ENCODE measurements at regions of chr3 and their contacts with region 1.

Region 1: DNA sequence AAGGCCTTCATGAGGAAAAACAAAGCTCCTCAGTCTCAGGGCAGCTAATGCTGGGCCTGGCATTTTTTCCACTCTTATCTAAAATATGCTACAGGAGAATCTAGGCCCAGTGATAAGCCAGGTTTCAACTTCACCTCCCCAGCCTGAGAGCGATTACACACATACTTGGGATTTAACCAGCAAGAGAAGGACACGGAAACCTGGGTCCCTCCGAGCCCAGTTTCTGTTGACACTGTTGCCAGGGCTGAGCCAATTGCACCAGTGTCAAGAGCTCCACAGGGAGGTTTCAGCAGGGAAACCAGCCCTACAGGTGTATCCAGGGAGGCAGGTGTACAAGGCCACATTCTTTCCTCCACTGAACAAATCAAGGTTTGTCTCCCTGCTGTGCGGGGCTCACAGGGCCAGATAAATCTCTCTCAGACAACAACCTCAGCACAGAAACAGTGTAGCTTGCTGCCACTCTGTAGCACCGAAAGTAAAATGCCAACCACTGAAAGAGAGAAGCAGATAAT is 85.4 kb downstream of the MAGI1 start:
- DNase-seq: no peak
- H3K4me3 ChIP-seq: no peak overlapping the region
- H3K27ac ChIP-seq: peak overlapping the region; percentile 97
- H3K4me1 ChIP-seq: peaks cover 59% of the 10 kb centered on the region
- H3K27me3 ChIP-seq: no peaks in the 10 kb centered on the region
- CTCF ChIP-seq: no peak

Region 2: GRCh38 chr3:65178703-65179102 is 774.7 kb before region 1 on chr3:
- CTCF ChIA-PET with region 1: no interaction called
- POLR2A ChIA-PET with region 1: no interaction called
- intact Hi-C with region 1: no loop called
- DNase-seq: no peak
- H3K4me3 ChIP-seq: no peak overlapping the region
- H3K27ac ChIP-seq: no peak overlapping the region
- H3K4me1 ChIP-seq: no peaks in the 10 kb centered on the region
- H3K27me3 ChIP-seq: no peaks in the 10 kb centered on the region
- CTCF ChIP-seq: no peak

Region 3: DNA sequence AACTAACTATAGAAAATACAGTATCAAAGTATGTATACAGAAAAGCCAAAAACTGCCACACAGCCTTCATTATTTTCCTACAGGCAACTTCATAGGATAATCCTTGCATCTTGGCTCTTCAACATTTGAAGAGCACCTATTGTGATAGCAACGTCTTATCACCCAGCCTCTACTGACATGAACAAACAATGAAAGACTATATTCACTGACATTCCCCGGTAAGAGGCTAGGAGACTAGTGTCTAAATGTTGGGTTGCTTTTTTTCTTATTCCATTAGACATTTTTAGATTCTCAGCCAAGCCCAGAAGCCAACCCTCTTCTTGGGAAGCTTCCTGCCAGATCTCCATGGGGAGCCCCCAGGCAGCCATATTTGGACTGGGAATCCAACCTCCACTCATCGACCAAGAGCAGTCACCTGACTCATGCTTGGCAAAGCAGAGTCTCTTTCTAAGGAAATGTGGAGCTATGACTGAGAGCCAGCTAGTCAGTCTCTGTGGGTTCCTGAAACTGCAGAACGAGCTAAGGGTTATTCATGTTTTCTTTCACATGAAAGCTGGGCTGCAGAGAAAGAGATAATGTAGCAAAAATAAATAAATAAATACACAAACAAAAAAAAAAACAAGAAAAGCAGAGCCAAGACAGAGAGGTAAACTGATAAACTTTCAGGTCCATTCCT is 142.1 kb before region 1 on chr3:
- CTCF ChIA-PET with region 1: no interaction called
- POLR2A ChIA-PET with region 1: no interaction called
- intact Hi-C with region 1: loop called (anchors 10 kb)
- DNase-seq: peak; percentile 73
- H3K4me3 ChIP-seq: peak overlapping the region; percentile 28
- H3K27ac ChIP-seq: peak overlapping the region; percentile 84
- H3K4me1 ChIP-seq: peaks cover 43% of the 10 kb centered on the region
- H3K27me3 ChIP-seq: no peaks in the 10 kb centered on the region
- CTCF ChIP-seq: no peak

Region 4: DNA sequence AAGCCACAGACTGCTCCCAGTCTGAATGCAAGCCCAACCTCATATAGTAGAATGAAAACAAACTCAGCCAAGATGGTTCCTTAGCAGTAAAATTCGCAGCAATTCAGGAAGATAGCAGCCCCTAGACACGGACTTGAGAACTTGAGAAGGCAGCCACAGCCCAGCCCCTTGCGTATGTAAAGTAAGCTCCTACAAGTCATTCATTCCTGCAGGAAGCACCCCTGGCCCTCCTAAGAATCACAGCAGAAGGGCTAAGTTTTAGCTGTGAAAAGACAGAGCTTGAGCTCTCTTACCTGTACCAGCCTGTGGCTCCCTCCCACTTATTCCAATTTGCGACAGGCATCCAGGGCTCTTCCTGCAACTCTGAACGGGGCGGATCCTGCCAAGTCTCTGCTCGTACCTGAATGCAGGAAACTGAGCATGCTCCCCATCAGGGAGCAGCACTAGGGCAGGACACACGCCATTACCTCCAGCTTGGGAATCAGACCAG is 51.0 kb before region 1 on chr3:
- CTCF ChIA-PET with region 1: no interaction called
- POLR2A ChIA-PET with region 1: no interaction called
- intact Hi-C with region 1: no loop called
- DNase-seq: no peak
- H3K4me3 ChIP-seq: no peak overlapping the region
- H3K27ac ChIP-seq: no peak overlapping the region
- H3K4me1 ChIP-seq: peaks cover 16% of the 10 kb centered on the region
- H3K27me3 ChIP-seq: no peaks in the 10 kb centered on the region
- CTCF ChIP-seq: no peak

Region 5: GRCh38 chr3:66038726-66039589 is 85.6 kb after region 1 on chr3 and contains the start of gene MAGI1:
- CTCF ChIA-PET with region 1: no interaction called
- POLR2A ChIA-PET with region 1: no interaction called
- intact Hi-C with region 1: loop called (anchors 5 kb)
- DNase-seq: peak; percentile 91
- H3K4me3 ChIP-seq: peak within 1 kb of the TSS; percentile 85
- H3K27ac ChIP-seq: peak within 1 kb of the TSS; percentile 91
- H3K4me1 ChIP-seq: no peaks in the 10 kb centered on the region
- H3K27me3 ChIP-seq: no peaks in the 10 kb centered on the region
- CTCF ChIP-seq: no peak
- total RNA-seq, gene MAGI1: 30.5 and 36.1 TPM in 2 replicates

Region 6: DNA sequence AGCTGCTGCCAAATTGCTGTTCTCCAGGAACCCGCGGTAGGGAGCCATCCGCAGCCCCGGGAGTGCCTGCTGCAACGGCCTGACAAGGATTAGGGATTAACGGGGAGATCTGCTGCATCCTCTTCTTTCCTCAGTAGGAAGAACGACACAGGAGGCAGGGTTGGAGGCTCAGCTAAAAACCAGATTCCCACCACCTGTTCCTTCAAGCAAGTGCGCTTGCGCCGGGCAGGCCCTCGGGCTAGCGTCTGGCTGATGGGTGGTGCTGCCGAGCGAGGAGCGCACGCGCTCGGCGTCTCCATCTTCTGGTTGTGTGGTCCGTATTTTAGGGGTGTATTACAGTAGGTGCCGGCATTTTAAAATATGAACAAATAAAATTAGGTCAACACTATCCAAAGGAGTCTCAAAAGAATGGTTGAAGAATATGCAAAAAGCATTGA is 242.0 kb after region 1 on chr3:
- CTCF ChIA-PET with region 1: no interaction called
- POLR2A ChIA-PET with region 1: no interaction called
- intact Hi-C with region 1: loop called (anchors 2 kb)
- DNase-seq: peak; percentile 90
- H3K4me3 ChIP-seq: peak overlapping the region; percentile 43
- H3K27ac ChIP-seq: no peak overlapping the region
- H3K4me1 ChIP-seq: peaks cover 11% of the 10 kb centered on the region
- H3K27me3 ChIP-seq: no peaks in the 10 kb centered on the region
- CTCF ChIP-seq: peak; percentile 43

Region 7: DNA sequence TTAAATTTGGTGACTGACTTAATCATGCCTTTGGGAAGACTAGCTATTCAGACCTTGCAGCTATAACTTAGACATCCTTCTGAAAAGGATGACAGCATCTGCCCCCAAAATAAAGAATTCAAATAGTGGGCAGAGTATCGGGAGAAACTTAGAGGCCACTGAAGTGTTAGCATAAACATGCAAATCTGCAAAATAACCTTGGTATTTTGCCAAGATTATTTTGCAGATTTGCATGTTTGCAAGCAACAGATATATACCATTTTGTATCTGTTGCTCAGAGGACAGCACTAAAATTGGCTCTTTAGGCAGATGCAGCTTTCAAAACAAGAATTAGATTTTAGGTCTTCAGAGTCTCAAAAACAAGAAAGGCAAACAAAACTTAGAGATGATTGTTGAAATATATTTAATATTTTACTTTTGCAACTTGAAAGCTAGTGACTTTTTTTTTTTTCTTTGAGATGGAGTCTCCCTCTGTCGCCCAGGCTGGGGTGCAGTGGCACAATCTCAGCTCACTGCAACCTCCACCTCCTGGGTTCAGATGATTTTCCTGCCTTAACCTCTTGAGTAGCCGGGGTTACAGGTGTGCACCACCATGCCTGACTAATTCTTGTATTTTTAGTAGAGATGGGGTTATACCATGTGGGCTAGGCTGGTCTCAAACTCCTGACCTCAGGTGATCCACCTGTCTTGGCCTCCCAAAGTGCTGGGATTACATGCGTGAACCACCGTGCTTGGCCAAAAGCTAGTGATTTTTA is 1092.5 kb after region 1 on chr3:
- CTCF ChIA-PET with region 1: no interaction called
- POLR2A ChIA-PET with region 1: interaction called, 10 read pairs
- intact Hi-C with region 1: no loop called
- DNase-seq: no peak
- H3K4me3 ChIP-seq: no peak overlapping the region
- H3K27ac ChIP-seq: no peak overlapping the region
- H3K4me1 ChIP-seq: no peaks in the 10 kb centered on the region
- H3K27me3 ChIP-seq: no peaks in the 10 kb centered on the region
- CTCF ChIP-seq: no peak

Measured in A673 (cell line).